ENCODE measurements at regions of chr10 and their contacts with region 1.

Region 1: GRCh38 chr10:91367127-91367531 is 43.0 kb upstream of the HECTD2 start:
- DNase-seq: no peak
- H3K27ac ChIP-seq: no peak overlapping the region
- CTCF ChIP-seq: no peak

Region 2: DNA sequence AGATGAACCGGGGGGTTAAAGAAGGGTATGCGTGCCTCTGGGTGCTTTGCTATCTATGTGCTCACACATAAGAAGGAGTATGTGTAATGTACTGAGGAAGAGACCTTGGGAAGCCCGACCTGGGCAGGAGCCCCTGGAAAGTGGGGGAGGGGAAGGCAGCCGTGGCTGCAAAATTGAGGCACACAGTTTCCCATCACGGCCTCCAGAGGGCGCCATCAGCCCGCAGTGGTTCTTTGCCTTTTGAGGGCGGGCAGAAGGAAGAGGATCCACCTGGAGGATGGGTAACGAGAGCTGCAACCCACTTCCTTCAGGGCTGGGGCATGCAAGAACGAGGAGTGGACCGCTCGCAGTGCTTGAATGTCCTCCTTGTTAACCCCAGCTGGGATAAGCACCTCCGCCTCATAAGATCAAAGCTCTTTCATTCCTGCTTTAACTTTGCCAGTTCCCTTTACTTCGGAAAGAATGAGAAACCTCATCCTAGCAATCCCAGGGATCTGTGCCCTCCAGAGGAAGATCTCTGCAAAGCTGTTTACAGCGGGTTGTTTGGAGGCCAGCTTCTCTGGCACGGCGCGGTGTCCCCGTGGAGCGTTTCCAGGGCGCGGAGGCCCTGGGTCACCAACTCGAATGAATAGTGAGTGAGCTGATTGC is 68.8 kb before region 1 on chr10:
- CTCF ChIA-PET with region 1: interaction called, 47 read pairs
- POLR2A ChIA-PET with region 1: no interaction called
- DNase-seq: peak; percentile 83
- H3K27ac ChIP-seq: peak overlapping the region; percentile 45
- CTCF ChIP-seq: peak; percentile 95

Region 3: GRCh38 chr10:91328320-91328984 is 38.7 kb before region 1 on chr10:
- CTCF ChIA-PET with region 1: no interaction called
- POLR2A ChIA-PET with region 1: no interaction called
- DNase-seq: no peak
- H3K27ac ChIP-seq: no peak overlapping the region
- CTCF ChIP-seq: no peak

Region 4: GRCh38 chr10:91349381-91349780 is 17.7 kb before region 1 on chr10:
- CTCF ChIA-PET with region 1: no interaction called
- POLR2A ChIA-PET with region 1: no interaction called
- DNase-seq: no peak
- H3K27ac ChIP-seq: peak overlapping the region; percentile 92
- CTCF ChIP-seq: no peak

Region 5: GRCh38 chr10:91864099-91864498 is 497.0 kb after region 1 on chr10:
- CTCF ChIA-PET with region 1: no interaction called
- POLR2A ChIA-PET with region 1: no interaction called
- DNase-seq: no peak
- H3K27ac ChIP-seq: no peak overlapping the region
- CTCF ChIP-seq: no peak